Activated CD8-positive, alpha-beta T cell treated with anti-CD3 and anti-CD28 coated beads, Interleukin-2, amount 10 ng/mL, durations not matched to agents 7 days and 5 days (primary cell): ENCODE measurements at regions of chr9 and their contacts with region 1.

Region 1: GRCh38 chr9:22119537-22120158 is 110.5 kb upstream of the CDKN2B start:
- DNase-seq: peak; percentile 56
- ATAC-seq: peak; percentile 91
- H3K4me3 Mint-ChIP-seq: no peak overlapping the region
- H3K27ac Mint-ChIP-seq: no peak overlapping the region
- H3K4me1 Mint-ChIP-seq: peaks cover 35% of the 10 kb centered on the region
- H3K27me3 Mint-ChIP-seq: peaks cover 41% of the 10 kb centered on the region

Region 2: DNA sequence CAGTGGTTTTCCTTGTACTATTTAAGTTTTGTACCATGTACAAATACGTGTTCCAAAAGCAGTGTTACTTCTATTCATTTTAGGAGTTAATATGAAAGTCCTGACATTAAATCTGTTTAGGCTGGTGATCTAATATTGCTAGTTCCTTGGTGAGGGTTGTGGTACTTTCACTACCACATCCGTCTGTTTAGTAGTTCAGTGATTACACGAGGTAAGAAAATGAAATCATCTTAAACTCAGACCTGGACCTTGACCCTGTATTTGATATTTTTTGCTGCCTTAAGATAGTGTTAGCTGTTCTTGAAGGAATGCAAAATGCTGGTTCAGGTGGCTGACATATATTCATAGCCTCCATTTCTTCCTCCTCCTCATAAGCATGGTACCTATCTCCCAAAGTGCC is 266.9 kb before region 1 on chr9:
- CTCF ChIA-PET with region 1: no interaction called
- POLR2A ChIA-PET with region 1: no interaction called
- DNase-seq: no peak
- ATAC-seq: no peak
- H3K4me3 Mint-ChIP-seq: no peak overlapping the region
- H3K27ac Mint-ChIP-seq: no peak overlapping the region
- H3K4me1 Mint-ChIP-seq: peaks cover 16% of the 10 kb centered on the region
- H3K27me3 Mint-ChIP-seq: no peaks in the 10 kb centered on the region

Region 3: GRCh38 chr9:21965401-21965951 is 154.2 kb before region 1 on chr9:
- CTCF ChIA-PET with region 1: no interaction called
- POLR2A ChIA-PET with region 1: no interaction called
- DNase-seq: peak; percentile 71
- ATAC-seq: peak; percentile 73
- H3K4me3 Mint-ChIP-seq: peak overlapping the region; percentile 55
- H3K27ac Mint-ChIP-seq: peak overlapping the region; percentile 12
- H3K4me1 Mint-ChIP-seq: peaks cover 42% of the 10 kb centered on the region
- H3K27me3 Mint-ChIP-seq: peaks cover 86% of the 10 kb centered on the region

Region 4: DNA sequence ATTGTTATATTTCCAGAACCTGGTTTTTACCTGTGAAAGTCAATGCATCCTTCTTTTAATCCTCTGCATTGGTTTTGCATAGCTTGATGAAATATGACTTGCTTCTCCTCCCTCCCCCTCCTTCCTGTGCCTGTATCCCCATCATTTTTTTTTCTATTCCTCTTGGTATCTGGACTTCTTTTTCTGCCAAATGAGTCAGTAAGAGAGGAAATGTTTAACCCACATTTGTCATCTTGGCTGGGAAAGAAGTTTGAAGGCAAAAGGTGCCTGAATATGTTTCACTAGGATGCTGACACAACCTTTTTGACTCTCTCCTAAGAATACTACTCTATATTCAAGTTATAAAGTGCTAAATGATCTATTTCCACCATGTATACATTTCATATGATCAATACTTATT is 75.1 kb before region 1 on chr9:
- CTCF ChIA-PET with region 1: interaction called, 77 read pairs
- POLR2A ChIA-PET with region 1: no interaction called
- DNase-seq: no peak
- ATAC-seq: no peak
- H3K4me3 Mint-ChIP-seq: no peak overlapping the region
- H3K27ac Mint-ChIP-seq: no peak overlapping the region
- H3K4me1 Mint-ChIP-seq: peaks cover 72% of the 10 kb centered on the region
- H3K27me3 Mint-ChIP-seq: peaks cover 21% of the 10 kb centered on the region

Region 5: DNA sequence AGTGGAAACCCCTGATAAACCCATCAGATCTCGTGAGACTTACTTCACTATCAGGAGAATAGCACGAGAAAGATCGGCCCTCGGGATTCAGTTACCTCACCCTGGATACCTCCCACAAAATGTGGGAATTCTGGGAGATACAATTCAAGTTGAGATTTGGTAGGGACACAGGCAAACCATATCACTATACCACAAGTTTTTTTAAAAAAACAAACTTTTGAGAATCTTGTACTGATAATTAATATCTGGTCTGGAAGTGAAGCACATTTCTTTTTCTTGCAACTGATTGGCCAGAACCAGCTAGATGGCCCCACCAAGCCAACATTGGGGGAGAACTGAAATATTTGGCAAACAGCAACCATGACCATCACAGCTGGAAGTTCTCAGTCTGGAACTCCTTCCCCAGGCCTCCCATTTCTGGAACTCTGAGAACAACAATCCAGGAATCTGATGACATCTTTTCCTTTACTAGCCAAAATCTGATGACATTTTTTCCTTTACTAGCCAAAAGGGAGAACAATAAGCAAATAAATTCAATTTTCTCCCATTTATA is 58.7 kb before region 1 on chr9:
- CTCF ChIA-PET with region 1: interaction called, 16 read pairs
- POLR2A ChIA-PET with region 1: no interaction called
- DNase-seq: no peak
- ATAC-seq: no peak
- H3K4me3 Mint-ChIP-seq: no peak overlapping the region
- H3K27ac Mint-ChIP-seq: no peak overlapping the region
- H3K4me1 Mint-ChIP-seq: peaks cover 41% of the 10 kb centered on the region
- H3K27me3 Mint-ChIP-seq: no peaks in the 10 kb centered on the region

Region 6: GRCh38 chr9:22079873-22080341 is 39.7 kb before region 1 on chr9:
- CTCF ChIA-PET with region 1: interaction called, 16 read pairs
- POLR2A ChIA-PET with region 1: no interaction called
- DNase-seq: peak; percentile 82
- ATAC-seq: peak; percentile 94
- H3K4me3 Mint-ChIP-seq: peak overlapping the region; percentile 7
- H3K27ac Mint-ChIP-seq: peak overlapping the region; percentile 84
- H3K4me1 Mint-ChIP-seq: peaks cover 66% of the 10 kb centered on the region
- H3K27me3 Mint-ChIP-seq: peaks cover 7% of the 10 kb centered on the region

Region 7: GRCh38 chr9:22169727-22170503 is 50.3 kb after region 1 on chr9:
- CTCF ChIA-PET with region 1: no interaction called
- POLR2A ChIA-PET with region 1: no interaction called
- DNase-seq: no peak
- ATAC-seq: no peak
- H3K4me3 Mint-ChIP-seq: no peak overlapping the region
- H3K27ac Mint-ChIP-seq: no peak overlapping the region
- H3K4me1 Mint-ChIP-seq: peaks cover 7% of the 10 kb centered on the region
- H3K27me3 Mint-ChIP-seq: peaks cover 19% of the 10 kb centered on the region

Region 8: GRCh38 chr9:22238809-22239684 is 119.4 kb after region 1 on chr9:
- CTCF ChIA-PET with region 1: interaction called, 14 read pairs
- POLR2A ChIA-PET with region 1: no interaction called
- DNase-seq: no peak
- ATAC-seq: peak; percentile 36
- H3K4me3 Mint-ChIP-seq: no peak overlapping the region
- H3K27ac Mint-ChIP-seq: peak overlapping the region; percentile 14
- H3K4me1 Mint-ChIP-seq: peaks cover 48% of the 10 kb centered on the region
- H3K27me3 Mint-ChIP-seq: peaks cover 17% of the 10 kb centered on the region